Sigmoid colon (tissue), 7 donors: ENCODE measurements at regions of chr2 and their contacts with region 1.

Region 1: DNA sequence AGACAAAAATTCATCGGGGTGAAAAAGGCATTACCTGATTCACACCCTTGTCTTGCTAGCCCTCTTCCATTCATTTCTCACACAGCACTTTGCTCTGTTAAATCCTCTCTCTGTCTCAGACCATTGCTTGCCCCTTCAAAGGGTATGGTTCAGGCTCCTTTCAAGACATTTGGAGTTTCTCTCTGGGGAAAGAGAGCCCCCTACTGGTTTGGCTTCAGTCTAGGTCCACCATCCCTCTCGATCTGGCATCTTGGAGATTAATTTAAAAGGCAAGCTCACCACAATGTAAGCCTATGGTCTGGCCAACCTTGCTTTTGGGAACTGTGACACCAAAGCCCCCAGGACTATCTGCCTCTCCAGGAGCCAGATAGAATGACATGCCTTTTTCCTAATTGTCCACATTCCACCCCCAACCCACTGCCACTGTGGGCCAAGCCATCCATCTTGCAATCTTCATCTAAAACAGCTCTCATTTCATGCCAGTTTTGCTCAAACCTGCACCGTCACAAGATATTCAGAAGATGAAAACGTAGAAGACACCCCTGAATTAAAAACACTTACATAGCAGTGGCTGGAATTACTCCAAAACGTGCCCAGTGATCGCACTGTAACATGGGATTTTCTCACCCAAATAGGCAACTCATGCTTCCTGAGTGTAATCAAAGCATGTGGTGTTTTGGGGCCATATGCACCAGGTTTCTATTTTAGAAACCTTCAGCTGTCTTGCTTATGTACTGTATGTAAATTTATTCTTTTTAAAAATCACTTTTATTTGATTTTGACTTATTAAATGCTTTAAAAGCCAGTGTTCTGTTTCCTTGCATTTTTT is 93.9 kb downstream of the FARSB start:
- DNase-seq: no peak
- H3K4me3 ChIP-seq: no peak overlapping the region
- H3K27ac ChIP-seq: no peak overlapping the region
- H3K4me1 ChIP-seq: no peaks in the 10 kb centered on the region
- H3K27me3 ChIP-seq: no peaks in the 10 kb centered on the region
- CTCF ChIP-seq: peak; percentile 32 to 69 (median 46)
- EP300 ChIP-seq: no peak
- POLR2A ChIP-seq: no peak

Region 2: GRCh38 chr2:222318026-222318711 is 243.9 kb before region 1 on chr2:
- intact Hi-C with region 1: loop called (anchors 1 kb)
- DNase-seq: no peak
- H3K4me3 ChIP-seq: peak overlapping the region; percentile 27 to 67 (median 50)
- H3K27ac ChIP-seq: peak overlapping the region in 2 of 4 donors; percentile 51 to 85
- H3K4me1 ChIP-seq: peaks cover 0 to 26% (median 22%) of the 10 kb centered on the region in 4 donors
- H3K27me3 ChIP-seq: peaks cover 12 to 65% (median 32%) of the 10 kb centered on the region in 3 donors
- CTCF ChIP-seq: peak; percentile 19 to 44 (median 38)
- EP300 ChIP-seq: no peak
- POLR2A ChIP-seq: no peak

Region 3: GRCh38 chr2:222769446-222769845 is 207.4 kb after region 1 on chr2:
- intact Hi-C with region 1: no loop called
- DNase-seq: no peak
- H3K4me3 ChIP-seq: no peak overlapping the region
- H3K27ac ChIP-seq: no peak overlapping the region
- H3K4me1 ChIP-seq: no peaks in the 10 kb centered on the region
- H3K27me3 ChIP-seq: no peaks in the 10 kb centered on the region
- CTCF ChIP-seq: no peak
- EP300 ChIP-seq: no peak
- POLR2A ChIP-seq: no peak